ENCODE measurements at regions of chr17 and their contacts with region 1.

Region 1: GRCh38 chr17:40191237-40192208 is 14.3 kb downstream of the RAPGEFL1 start:
- DNase-seq: peak; percentile 86

Region 2: DNA sequence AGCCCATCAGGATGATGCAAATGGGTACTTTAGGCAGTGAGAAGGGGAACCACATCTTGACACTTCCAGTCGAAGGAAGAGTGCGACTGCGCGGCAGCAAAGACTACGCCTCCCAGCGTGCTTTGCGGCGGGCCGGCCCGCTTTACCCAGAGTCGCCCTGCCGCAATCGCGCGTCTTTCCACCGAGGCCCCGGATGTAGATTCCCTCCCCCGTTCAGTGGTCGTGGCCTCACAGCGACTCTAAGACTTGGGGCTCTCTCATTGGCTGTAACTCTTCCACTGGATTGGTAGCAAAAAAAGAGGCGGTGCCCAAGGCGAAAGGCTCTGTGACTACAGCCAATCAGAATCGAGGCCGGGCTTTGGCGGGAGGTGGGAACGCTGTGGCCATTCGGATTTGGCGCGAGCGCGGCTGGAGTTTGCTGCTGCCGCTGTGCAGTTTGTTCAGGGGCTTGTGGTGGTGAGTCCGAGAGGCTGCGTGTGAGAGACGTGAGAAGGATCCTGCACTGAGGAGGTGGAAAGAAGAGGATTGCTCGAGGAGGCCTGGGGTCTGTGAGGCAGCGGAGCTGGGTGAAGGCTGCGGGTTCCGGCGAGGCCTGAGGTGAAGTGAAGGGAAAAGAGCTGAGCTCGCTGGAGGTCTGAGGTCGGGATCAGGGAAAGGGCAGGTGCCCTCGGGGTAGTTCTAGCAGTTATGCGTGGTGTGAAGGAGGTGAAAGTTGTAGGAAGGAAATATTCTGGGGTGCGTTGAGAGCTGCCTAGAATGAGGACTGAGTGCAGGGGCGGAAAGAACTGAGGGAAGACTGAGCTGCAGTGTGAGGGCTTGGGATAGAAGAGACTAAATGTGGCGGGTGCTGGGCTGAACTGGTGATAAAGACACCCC is 96.2 kb after region 1 on chr17 and contains the start of gene CDC6:
- in situ Hi-C with region 1: loop called (anchors 25 kb)
- DNase-seq: peak; percentile 99
- total RNA-seq, gene CDC6: 60.9 and 68.1 TPM in 2 replicates